Gastrocnemius medialis (tissue), 4 donors: ENCODE measurements at regions of chr1 and their contacts with region 1.

Region 1: DNA sequence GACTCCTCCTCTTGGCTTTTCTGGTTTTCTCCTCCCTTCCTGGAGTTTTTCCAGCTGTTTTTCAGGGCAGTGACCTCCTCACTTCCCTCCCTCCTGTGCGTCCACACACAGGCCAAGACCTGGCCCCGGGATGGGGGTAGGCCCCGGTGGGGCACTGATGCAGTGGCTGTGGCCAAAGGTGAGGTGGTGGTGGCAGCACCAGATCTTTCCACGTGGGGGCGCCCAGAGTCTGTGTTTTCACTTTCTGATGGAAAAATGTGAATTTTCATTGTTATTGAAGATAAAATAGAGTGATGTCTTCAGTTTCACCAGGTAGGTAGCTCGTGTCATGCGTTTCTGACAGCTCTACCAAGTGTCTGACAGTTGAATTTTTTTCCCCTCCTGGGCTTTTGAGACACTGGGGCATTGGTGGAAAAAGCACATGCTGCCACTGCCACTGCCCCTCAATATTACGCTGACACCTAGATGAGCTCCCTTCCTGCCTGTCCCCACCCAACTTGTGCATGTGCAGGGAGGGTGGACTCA is 39.9 kb upstream of the MAGOH start:
- DNase-seq: peak in 1 of 2 donors; percentile 20
- ATAC-seq: no peak
- H3K4me3 ChIP-seq: no peak overlapping the region
- H3K27ac ChIP-seq: no peak overlapping the region
- H3K4me1 ChIP-seq: no peaks in the 10 kb centered on the region
- H3K27me3 ChIP-seq: no peaks in the 10 kb centered on the region
- CTCF ChIP-seq: peak; percentile 85 to 91 (median 89)
- POLR2A ChIP-seq: no peak

Region 2: GRCh38 chr1:52892424-52893215 is 385.6 kb before region 1 on chr1:
- in situ Hi-C with region 1: no loop called
- intact Hi-C with region 1: no loop called
- DNase-seq: no peak
- ATAC-seq: no peak
- H3K4me3 ChIP-seq: no peak overlapping the region
- H3K27ac ChIP-seq: no peak overlapping the region
- H3K4me1 ChIP-seq: no peaks in the 10 kb centered on the region
- H3K27me3 ChIP-seq: no peaks in the 10 kb centered on the region
- CTCF ChIP-seq: no peak
- POLR2A ChIP-seq: no peak

Region 3: DNA sequence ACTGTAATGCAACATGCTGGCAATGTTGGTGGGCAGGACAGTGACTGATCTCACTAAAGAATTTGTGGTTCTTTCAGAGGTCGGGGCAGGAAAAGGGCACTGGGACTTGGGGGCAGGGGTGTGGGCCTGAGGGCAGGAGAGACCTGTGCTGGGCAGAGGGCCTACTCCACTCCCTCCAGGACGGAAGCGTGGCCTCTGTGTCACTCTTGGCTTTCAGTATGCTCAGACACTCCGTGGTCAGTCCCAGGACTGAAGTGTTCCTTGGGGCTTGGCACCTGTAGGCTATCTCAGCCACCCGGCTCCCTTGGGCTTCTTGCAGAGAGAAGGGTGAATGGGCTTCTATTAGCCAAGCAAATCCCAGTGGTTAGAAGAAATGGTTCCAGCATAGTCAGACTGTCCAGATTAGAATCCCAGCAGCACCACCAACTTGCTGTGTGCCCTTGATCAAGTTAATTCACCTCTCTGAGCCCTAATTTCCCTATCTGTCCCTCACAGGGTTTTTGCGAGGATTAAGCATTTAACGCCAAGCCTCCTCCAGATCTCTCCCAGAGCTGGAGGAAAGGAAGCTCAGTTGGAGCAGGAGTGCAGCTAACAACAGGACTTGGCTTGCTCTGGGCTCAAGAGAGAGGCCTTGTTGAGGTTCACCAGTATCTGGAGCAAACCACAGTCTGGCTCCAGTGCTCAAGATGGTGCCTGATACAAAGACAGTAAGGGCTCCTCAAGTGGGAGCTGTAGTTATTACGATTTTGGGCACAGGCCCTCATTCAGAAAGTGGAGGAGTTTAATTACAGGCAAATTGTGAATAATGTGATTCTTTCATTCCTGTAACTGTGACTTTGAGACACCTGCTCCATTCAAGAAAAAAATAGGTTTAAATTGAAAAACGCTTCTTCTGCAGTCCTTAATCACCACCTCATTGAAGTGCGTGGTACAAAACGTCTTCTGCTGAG is 107.3 kb after region 1 on chr1:
- in situ Hi-C with region 1: loop called (anchors 5 kb)
- intact Hi-C with region 1: no loop called
- DNase-seq: no peak
- ATAC-seq: no peak
- H3K4me3 ChIP-seq: no peak overlapping the region
- H3K27ac ChIP-seq: no peak overlapping the region
- H3K4me1 ChIP-seq: no peaks in the 10 kb centered on the region
- H3K27me3 ChIP-seq: peaks cover 0 to 3% (median 0%) of the 10 kb centered on the region in 3 donors
- CTCF ChIP-seq: no peak
- POLR2A ChIP-seq: no peak

Region 4: GRCh38 chr1:53393325-53393792 is 115.1 kb after region 1 on chr1:
- in situ Hi-C with region 1: loop called (anchors 5 kb)
- intact Hi-C with region 1: loop called (anchors 1 kb)
- DNase-seq: peak; percentile 24 to 53
- ATAC-seq: peak; percentile 82 to 87
- H3K4me3 ChIP-seq: no peak overlapping the region
- H3K27ac ChIP-seq: no peak overlapping the region
- H3K4me1 ChIP-seq: no peaks in the 10 kb centered on the region
- H3K27me3 ChIP-seq: no peaks in the 10 kb centered on the region
- CTCF ChIP-seq: peak; percentile 79 to 95 (median 91)
- POLR2A ChIP-seq: no peak